ENCODE measurements at regions of chr5 and their contacts with region 1.

Region 1: DNA sequence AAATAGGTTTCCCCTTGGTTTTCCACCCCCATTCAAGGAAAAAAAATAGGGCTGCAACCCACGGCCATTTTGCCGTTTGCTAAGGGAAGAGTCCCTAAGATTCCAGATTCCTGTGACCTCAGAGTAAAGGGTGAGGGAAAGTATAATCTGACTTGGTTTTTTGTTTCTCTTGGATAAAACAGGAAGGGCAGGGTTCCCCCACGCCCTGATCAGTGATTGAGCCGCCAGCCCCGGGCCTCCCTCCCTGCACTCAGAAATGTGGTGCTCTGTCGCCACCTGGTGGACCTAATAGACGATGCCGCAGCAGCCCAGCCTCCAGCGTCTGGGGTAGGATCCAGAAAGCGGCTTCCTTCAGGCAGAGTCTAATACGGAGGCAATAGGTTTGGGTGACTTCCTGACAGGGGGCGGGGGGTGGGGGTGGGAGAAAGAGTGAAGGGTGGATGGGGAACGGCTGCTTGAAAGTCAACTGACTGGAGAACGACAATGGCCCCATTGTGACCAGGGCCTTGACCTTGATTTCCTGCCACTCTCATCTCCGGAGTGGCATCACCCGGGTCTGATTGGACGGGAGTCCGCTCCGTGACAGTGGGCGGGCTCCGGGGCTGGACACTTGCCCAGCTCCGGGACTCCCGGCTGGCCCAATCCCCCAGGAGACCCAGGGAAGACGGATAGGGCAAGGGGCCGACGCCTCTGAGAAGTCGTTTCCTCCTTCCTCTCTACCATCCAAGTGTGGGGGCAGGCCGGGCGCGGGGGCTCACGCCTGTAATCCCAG is 17.8 kb upstream of the CYSTM1 start:
- DNase-seq: peak; percentile 88
- H3K4me3 Mint-ChIP-seq: peak overlapping the region; percentile 50
- H3K27ac Mint-ChIP-seq: peak overlapping the region; percentile 8
- H3K4me1 Mint-ChIP-seq: peaks cover 9% of the 10 kb centered on the region
- H3K27me3 Mint-ChIP-seq: no peaks in the 10 kb centered on the region

Region 2: GRCh38 chr5:140073296-140073695 is 83.9 kb before region 1 on chr5:
- CTCF ChIA-PET with region 1: interaction called, 32 read pairs
- POLR2A ChIA-PET with region 1: no interaction called
- DNase-seq: no peak
- H3K4me3 Mint-ChIP-seq: no peak overlapping the region
- H3K27ac Mint-ChIP-seq: no peak overlapping the region
- H3K4me1 Mint-ChIP-seq: peaks cover 2% of the 10 kb centered on the region
- H3K27me3 Mint-ChIP-seq: peaks cover 24% of the 10 kb centered on the region

Region 3: GRCh38 chr5:140126315-140127012 is 30.8 kb before region 1 on chr5:
- CTCF ChIA-PET with region 1: no interaction called
- POLR2A ChIA-PET with region 1: no interaction called
- DNase-seq: no peak
- H3K4me3 Mint-ChIP-seq: no peak overlapping the region
- H3K27ac Mint-ChIP-seq: no peak overlapping the region
- H3K4me1 Mint-ChIP-seq: peaks cover 18% of the 10 kb centered on the region
- H3K27me3 Mint-ChIP-seq: no peaks in the 10 kb centered on the region

Region 4: GRCh38 chr5:140169410-140169809 is 12.2 kb after region 1 on chr5:
- CTCF ChIA-PET with region 1: interaction called, 12 read pairs
- POLR2A ChIA-PET with region 1: no interaction called
- DNase-seq: no peak
- H3K4me3 Mint-ChIP-seq: no peak overlapping the region
- H3K27ac Mint-ChIP-seq: no peak overlapping the region
- H3K4me1 Mint-ChIP-seq: peaks cover 9% of the 10 kb centered on the region
- H3K27me3 Mint-ChIP-seq: peaks cover 2% of the 10 kb centered on the region

Measured in activated CD4-positive, alpha-beta memory T cell treated with anti-CD3 and anti-CD28 coated beads, Interleukin-2, amount 10 ng/mL, durations not matched to agents 7 days and 5 days (primary cell).